ENCODE measurements at regions of chr13 and their contacts with region 1.

Region 1: GRCh38 chr13:43878892-43879754 is at the start of gene CCDC122:
- DNase-seq: peak; percentile 96
- total RNA-seq, gene CCDC122: 5.8 to 9.9 TPM

Region 2: DNA sequence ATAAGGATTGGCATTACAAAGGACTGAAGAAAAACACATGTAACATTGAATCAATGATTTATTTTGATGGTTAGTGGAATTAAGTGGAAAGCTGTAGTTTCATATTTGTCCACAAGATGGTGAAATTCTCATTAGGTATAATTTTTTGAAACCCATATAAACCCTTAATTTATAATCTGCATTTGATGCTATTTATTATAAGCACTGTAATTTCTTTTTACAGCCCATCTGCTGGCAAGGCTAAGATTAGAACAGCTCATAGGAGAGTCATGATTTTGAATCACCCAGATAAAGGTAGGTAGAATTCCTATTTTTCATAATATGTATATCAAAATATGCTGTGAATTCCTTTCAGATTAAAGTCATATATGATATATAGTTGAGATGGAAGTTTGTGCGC is 793.6 kb before region 1 on chr13:
- intact Hi-C with region 1: loop called in 1 of 2 experiments (anchors 10 kb)
- DNase-seq: no peak

Region 3: DNA sequence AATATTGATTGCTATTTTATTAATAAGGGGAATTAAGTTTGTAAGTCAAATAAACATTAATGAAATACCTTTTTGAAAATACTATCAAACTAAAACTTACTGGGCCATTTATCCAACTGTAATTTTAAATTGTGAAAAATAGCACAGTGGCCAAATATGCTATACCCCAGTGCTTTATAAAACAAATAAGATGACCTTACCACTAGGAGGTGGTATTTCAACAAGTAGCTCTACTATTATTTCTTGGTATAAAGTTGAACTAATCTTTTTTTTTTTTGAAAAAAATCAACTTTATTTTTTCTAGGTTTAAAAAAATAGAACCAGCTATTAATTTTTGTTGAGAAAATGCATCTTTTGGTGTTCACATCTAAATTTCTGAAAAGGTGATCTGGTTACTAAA is 15.3 kb after region 1 on chr13:
- intact Hi-C with region 1: no loop called
- DNase-seq: no peak

Region 4: DNA sequence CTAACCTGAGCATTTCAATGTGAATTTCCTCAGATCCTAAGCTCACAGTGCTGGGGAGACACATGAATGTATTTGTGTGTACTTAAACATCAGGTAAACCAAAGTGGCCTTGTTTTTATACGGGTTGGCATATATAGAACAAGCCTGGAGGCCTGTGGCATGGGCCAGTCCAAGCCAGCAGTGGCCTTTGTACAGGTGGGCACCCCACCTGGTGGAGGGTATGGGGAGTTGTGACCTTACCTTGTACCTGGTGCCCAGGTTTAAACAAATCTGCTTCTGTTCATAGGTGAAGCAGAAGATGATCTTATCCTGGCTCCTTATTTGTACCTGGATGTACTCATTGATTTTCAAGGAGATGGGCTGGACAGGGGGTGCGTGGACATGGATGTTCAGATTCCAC is 1665.4 kb after region 1 on chr13:
- intact Hi-C with region 1: no loop called
- DNase-seq: no peak

Measured in posterior vena cava (tissue), 2 donors.